ENCODE measurements at regions of chr2 and their contacts with region 1.

Region 1: GRCh38 chr2:23414871-23415270 is 29.9 kb downstream of the KLHL29 start:
- DNase-seq: no peak
- H3K4me3 ChIP-seq: no peak overlapping the region
- H3K27ac ChIP-seq: no peak overlapping the region
- H3K4me1 ChIP-seq: no peaks in the 10 kb centered on the region; a peak in 1 of 7 replicates
- H3K27me3 ChIP-seq: no peaks in the 10 kb centered on the region
- CTCF ChIP-seq: peak; percentile 66 to 84 (median 76)
- EP300 ChIP-seq: no peak
- POLR2A ChIP-seq: no peak
- RAD21 ChIP-seq: peak; percentile 32 to 57; a peak in 3 of 4 replicates

Region 2: DNA sequence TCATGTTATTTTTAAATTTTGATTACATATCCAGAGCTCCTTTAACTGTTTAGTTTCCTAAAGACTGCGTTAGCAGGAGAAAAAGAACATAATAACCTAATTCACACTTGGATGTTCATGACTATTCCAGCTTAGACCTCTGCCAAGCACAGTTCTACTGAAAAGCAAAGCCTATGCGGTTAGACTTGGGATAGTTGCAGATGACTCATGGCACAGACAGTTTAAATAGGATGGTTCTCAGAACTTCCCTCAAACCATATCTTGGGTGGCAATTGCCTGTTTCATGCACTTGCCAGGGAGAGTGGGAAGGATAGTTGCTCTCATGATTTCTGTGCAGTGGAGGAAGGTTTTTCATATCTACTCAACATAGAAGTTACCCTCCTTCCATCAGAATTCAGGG is 179.6 kb before region 1 on chr2:
- CTCF ChIA-PET with region 1: no interaction called
- POLR2A ChIA-PET with region 1: no interaction called
- DNase-seq: no peak
- H3K4me3 ChIP-seq: no peak overlapping the region
- H3K27ac ChIP-seq: no peak overlapping the region
- H3K4me1 ChIP-seq: peaks cover 0 to 4% (median 0%) of the 10 kb centered on the region in 4 experiments; a peak in 2 of 7 replicates
- H3K27me3 ChIP-seq: no peaks in the 10 kb centered on the region
- CTCF ChIP-seq: no peak
- EP300 ChIP-seq: no peak
- POLR2A ChIP-seq: no peak
- RAD21 ChIP-seq: no peak

Region 3: DNA sequence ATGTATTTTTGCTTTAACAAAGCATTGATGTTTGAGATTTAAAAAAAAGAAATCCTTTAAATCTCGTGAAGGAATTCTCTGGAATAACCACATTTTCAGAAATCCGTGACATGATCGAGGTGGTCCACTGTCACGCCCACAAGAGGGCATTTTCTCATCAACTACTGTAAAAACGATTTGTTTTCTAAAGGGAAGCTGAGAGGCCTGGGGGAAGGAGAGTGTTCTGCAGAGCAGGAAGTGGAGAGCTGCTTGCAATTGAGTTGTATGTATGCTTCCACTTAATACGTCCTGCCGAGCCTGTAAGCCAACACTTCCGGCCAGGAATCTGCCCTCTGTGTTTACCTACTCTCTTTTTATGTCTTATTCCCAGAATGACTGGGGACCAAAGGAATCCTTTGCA is 10.4 kb before region 1 on chr2:
- CTCF ChIA-PET with region 1: interaction called, 12 read pairs
- POLR2A ChIA-PET with region 1: no interaction called
- DNase-seq: no peak
- H3K4me3 ChIP-seq: no peak overlapping the region
- H3K27ac ChIP-seq: no peak overlapping the region
- H3K4me1 ChIP-seq: peaks cover 0 to 8% (median 4%) of the 10 kb centered on the region in 4 experiments; a peak in 4 of 7 replicates
- H3K27me3 ChIP-seq: no peaks in the 10 kb centered on the region
- CTCF ChIP-seq: peak in 2 of 3 experiments; percentile 24 to 30; a peak in 2 of 4 replicates
- EP300 ChIP-seq: no peak
- POLR2A ChIP-seq: no peak
- RAD21 ChIP-seq: peak; percentile 51 to 58

Region 4: DNA sequence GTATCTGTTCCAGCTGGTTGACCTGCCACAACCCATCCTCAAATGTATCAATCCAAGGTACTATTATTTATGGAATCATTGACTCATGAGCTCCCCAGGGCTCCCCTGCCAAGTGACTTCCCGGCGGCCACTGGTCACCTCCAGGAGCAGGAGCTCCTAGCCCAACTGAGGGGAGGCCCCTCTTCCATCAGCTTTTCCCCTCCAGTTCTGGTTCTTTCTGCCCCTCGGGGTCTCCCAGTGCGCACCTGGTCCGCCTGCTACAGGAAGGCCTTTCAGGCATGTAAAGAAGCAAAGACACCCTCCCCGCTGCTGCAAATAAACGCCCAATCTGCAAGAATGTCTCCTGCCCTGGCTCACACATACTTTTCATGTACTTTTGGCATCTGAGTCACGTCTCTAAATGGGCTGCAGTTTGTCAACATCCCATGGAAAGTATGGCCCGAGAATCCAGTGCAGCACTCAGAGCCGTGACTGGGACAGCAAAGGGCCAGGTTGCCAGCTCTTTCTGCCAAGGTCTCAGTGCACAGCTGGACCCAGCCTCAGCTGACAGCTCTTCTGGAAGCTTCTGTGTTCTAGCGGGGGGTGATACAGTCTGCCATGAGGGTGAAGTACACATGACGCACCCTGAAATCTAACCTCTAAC is 11.5 kb after region 1 on chr2:
- CTCF ChIA-PET with region 1: interaction called, 26 read pairs
- POLR2A ChIA-PET with region 1: interaction called, 4 read pairs
- DNase-seq: peak in 1 of 2 experiments; percentile 41
- H3K4me3 ChIP-seq: no peak overlapping the region
- H3K27ac ChIP-seq: no peak overlapping the region
- H3K4me1 ChIP-seq: peaks cover 0 to 17% (median 10%) of the 10 kb centered on the region in 4 experiments; a peak in 6 of 7 replicates
- H3K27me3 ChIP-seq: no peaks in the 10 kb centered on the region
- CTCF ChIP-seq: no peak
- EP300 ChIP-seq: no peak
- POLR2A ChIP-seq: no peak
- RAD21 ChIP-seq: no peak

Region 5: GRCh38 chr2:23436346-23437098 is 21.7 kb after region 1 on chr2:
- CTCF ChIA-PET with region 1: interaction called, 26 read pairs
- POLR2A ChIA-PET with region 1: no interaction called
- DNase-seq: peak; percentile 44 to 59
- H3K4me3 ChIP-seq: no peak overlapping the region
- H3K27ac ChIP-seq: no peak overlapping the region
- H3K4me1 ChIP-seq: peaks cover 0 to 13% (median 10%) of the 10 kb centered on the region in 4 experiments; a peak in 4 of 7 replicates
- H3K27me3 ChIP-seq: no peaks in the 10 kb centered on the region
- CTCF ChIP-seq: no peak
- EP300 ChIP-seq: no peak
- POLR2A ChIP-seq: no peak
- RAD21 ChIP-seq: no peak

Region 6: DNA sequence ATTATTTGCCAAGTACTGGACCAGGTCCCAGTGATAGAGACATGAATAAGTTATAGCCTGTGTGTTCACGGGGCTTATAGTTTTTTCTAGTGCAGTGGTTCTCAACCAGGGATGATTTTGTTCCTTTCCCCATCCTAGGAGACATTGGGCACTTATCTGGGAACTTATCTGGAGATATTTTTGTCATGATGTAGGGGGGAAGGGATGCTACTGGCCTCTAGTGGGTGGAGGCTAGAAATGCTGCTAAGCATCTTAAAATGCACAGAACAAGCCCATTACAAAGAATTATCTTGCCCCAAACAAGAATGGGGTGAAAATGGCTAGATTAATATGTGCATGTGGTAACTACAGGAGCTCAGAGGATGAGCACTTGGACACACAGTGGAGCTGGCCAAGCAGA is 45.4 kb after region 1 on chr2:
- CTCF ChIA-PET with region 1: interaction called, 14 read pairs
- POLR2A ChIA-PET with region 1: no interaction called
- DNase-seq: no peak
- H3K4me3 ChIP-seq: no peak overlapping the region
- H3K27ac ChIP-seq: no peak overlapping the region
- H3K4me1 ChIP-seq: no peaks in the 10 kb centered on the region
- H3K27me3 ChIP-seq: no peaks in the 10 kb centered on the region; a peak in 2 of 7 replicates
- CTCF ChIP-seq: peak in 2 of 3 experiments; percentile 61 to 75; a peak in 3 of 4 replicates
- EP300 ChIP-seq: no peak
- POLR2A ChIP-seq: no peak
- RAD21 ChIP-seq: peak; percentile 77 to 82

Region 7: GRCh38 chr2:23480991-23481827 is 66.3 kb after region 1 on chr2:
- CTCF ChIA-PET with region 1: interaction called, 17 read pairs
- POLR2A ChIA-PET with region 1: no interaction called
- DNase-seq: peak in 1 of 2 experiments; percentile 82
- H3K4me3 ChIP-seq: no peak overlapping the region
- H3K27ac ChIP-seq: no peak overlapping the region; the same call in 1 of the 2 replicates
- H3K4me1 ChIP-seq: peaks cover 5 to 30% (median 13%) of the 10 kb centered on the region in 4 experiments
- H3K27me3 ChIP-seq: 0 out of 7 replicates have a peak, but pooled peaks cover 0 to 2% (median 0%) of the 10 kb centered on the region in 4 experiments
- CTCF ChIP-seq: no peak
- EP300 ChIP-seq: no peak
- POLR2A ChIP-seq: no peak
- RAD21 ChIP-seq: no peak

Region 8: GRCh38 chr2:23524261-23524706 is 109.4 kb after region 1 on chr2:
- CTCF ChIA-PET with region 1: no interaction called
- POLR2A ChIA-PET with region 1: no interaction called
- DNase-seq: no peak
- H3K4me3 ChIP-seq: no peak overlapping the region
- H3K27ac ChIP-seq: no peak overlapping the region
- H3K4me1 ChIP-seq: peaks cover 3 to 12% (median 5%) of the 10 kb centered on the region in 4 experiments; a peak in 5 of 7 replicates
- H3K27me3 ChIP-seq: no peaks in the 10 kb centered on the region; a peak in 1 of 7 replicates
- CTCF ChIP-seq: no peak
- EP300 ChIP-seq: no peak
- POLR2A ChIP-seq: no peak
- RAD21 ChIP-seq: no peak

Region 9: GRCh38 chr2:23566236-23567142 is 151.6 kb after region 1 on chr2:
- CTCF ChIA-PET with region 1: interaction called, 10 read pairs
- POLR2A ChIA-PET with region 1: no interaction called
- DNase-seq: peak; percentile 31 to 80
- H3K4me3 ChIP-seq: no peak overlapping the region
- H3K27ac ChIP-seq: no peak overlapping the region
- H3K4me1 ChIP-seq: peaks cover 0 to 10% (median 8%) of the 10 kb centered on the region in 4 experiments; a peak in 4 of 7 replicates
- H3K27me3 ChIP-seq: no peaks in the 10 kb centered on the region
- CTCF ChIP-seq: peak; percentile 52 to 88 (median 82)
- EP300 ChIP-seq: no peak
- POLR2A ChIP-seq: no peak
- RAD21 ChIP-seq: peak; percentile 61 to 71

Region 10: DNA sequence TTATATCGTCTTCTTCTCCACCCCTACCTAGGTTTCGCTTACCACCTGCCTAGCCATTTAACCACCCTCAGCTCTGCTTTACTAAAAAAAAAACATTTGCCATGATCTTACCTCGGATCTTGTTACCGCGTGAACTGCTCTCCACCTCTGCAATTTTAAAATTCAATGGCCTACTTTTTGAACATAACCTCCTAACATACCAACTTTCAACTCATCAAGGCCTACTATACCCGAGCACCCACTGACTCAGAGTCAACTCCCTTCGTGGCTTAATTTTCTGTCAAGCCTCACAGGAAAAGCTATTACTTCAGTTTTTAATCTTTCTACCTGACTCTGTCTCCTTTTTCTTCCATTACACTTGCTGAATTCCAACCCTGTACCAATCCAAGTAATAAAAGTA is 456.3 kb after region 1 on chr2:
- CTCF ChIA-PET with region 1: no interaction called
- POLR2A ChIA-PET with region 1: no interaction called
- DNase-seq: no peak
- H3K4me3 ChIP-seq: no peak overlapping the region
- H3K27ac ChIP-seq: no peak overlapping the region
- H3K4me1 ChIP-seq: no peaks in the 10 kb centered on the region
- H3K27me3 ChIP-seq: no peaks in the 10 kb centered on the region
- CTCF ChIP-seq: no peak
- EP300 ChIP-seq: no peak
- POLR2A ChIP-seq: no peak
- RAD21 ChIP-seq: no peak

Measured in H1 (cell line).